Right ventricle myocardium inferior (tissue), 1 donor: ENCODE measurements at regions of chr10 and their contacts with region 1.

Region 1: GRCh38 chr10:75035975-75036708 is 75.3 kb upstream of the SAMD8 start:
- DNase-seq: no peak
- ATAC-seq: no peak

Region 2: GRCh38 chr10:74855027-74855426 is 181.1 kb before region 1 on chr10:
- intact Hi-C with region 1: no loop called
- DNase-seq: no peak
- ATAC-seq: peak; percentile 79

Region 3: GRCh38 chr10:74913377-74913979 is 122.7 kb before region 1 on chr10:
- intact Hi-C with region 1: no loop called
- DNase-seq: no peak
- ATAC-seq: no peak

Region 4: DNA sequence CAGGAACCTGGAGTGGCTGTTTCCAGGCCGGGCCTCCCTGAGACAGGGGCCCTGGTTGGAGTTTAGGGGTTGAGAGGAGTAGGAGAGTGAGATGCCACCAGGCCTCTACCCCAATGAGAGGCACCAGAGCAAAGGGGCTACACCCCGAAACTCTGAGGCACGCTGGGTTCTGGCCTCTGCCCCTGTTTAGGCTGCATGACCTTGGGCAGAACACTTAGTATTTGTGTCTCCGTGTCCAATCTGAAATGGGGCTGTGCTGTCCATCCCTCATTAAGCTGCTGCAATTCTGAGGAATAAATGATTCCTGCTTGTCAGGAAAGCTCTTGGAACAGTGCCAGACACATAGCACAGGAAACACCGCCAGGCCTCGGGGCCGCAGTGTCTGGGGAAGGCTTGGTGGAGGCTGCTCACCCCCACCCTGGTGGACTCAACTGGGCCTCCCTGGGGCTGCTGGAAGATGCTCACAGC is 34.9 kb after region 1 on chr10:
- intact Hi-C with region 1: loop called (anchors 5 kb)
- DNase-seq: no peak
- ATAC-seq: peak; percentile 37